Activated CD4-positive, alpha-beta T cell treated with anti-CD3 and anti-CD28 coated beads for 36 hours (primary cell): ENCODE measurements at regions of chr19 and their contacts with region 1.

Region 1: GRCh38 chr19:2096480-2097329 is at the start of gene IZUMO4:
- DNase-seq: peak; percentile 100
- ATAC-seq: peak; percentile 85
- H3K4me3 Mint-ChIP-seq: peak within 1 kb of the TSS; percentile 98
- H3K27ac Mint-ChIP-seq: peak within 1 kb of the TSS; percentile 94
- H3K4me1 Mint-ChIP-seq: peaks cover 35% of the 10 kb centered on the region
- H3K27me3 Mint-ChIP-seq: no peaks in the 10 kb centered on the region
- total RNA-seq, gene IZUMO4: 15.2 to 16.6 TPM

Region 2: GRCh38 chr19:1652471-1653299 is 444.0 kb before region 1 on chr19 and contains the start of gene TCF3:
- CTCF ChIA-PET with region 1: no interaction called
- POLR2A ChIA-PET with region 1: no interaction called
- intact Hi-C with region 1: loop called in 1 of 2 experiments (anchors 1 kb)
- DNase-seq: peak; percentile 99
- ATAC-seq: peak; percentile 94
- H3K4me3 Mint-ChIP-seq: peak within 1 kb of the TSS; percentile 88
- H3K27ac Mint-ChIP-seq: peak within 1 kb of the TSS; percentile 91
- H3K4me1 Mint-ChIP-seq: peaks cover 32% of the 10 kb centered on the region
- H3K27me3 Mint-ChIP-seq: no peaks in the 10 kb centered on the region
- total RNA-seq, gene TCF3: 115 to 133 TPM

Region 3: DNA sequence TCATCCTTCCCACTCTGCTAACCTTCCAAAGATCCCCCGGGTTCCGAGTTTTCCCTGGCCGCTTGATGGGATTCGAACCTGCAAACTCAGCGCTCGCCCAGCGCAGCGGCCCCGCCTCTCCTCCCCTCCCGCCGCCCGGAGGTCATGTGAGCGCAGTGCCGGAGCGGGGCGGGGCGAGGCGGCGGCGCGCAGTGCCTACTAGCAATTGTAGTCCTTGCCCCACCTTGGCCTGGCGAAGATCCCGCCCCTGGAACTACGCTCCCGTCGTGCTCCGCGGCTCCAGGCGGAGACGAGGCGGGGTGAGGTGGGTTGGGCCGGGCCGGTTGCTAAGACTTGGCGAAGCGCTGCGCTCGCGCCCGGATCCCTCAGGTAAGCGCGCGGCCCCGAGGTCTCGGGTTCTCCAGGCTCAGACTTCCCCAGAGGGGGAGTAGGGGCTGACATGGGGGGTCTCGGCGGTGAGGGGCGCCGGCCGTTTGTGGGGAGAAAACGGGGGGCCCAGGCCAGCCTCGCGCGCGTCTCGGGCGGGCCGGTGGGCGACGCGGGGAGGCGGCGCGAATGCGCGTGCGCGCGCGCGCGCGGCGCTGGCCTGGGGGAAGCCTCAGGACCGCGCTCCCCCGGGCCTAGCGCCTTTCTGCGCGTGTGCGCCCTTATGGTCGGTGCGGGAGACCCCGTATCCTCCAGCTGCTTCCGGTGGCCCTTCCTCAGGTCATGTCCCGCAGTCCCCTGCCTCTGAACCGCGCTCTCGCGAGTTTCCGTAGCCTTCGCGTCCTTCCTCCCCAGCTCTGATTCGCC is 191.4 kb before region 1 on chr19 and contains the starts of genes ADAT3 and SCAMP4:
- CTCF ChIA-PET with region 1: no interaction called
- POLR2A ChIA-PET with region 1: interaction called, 6 read pairs
- intact Hi-C with region 1: loop called in 1 of 2 experiments (anchors 1 kb)
- DNase-seq: peak; percentile 100
- ATAC-seq: peak; percentile 98
- H3K4me3 Mint-ChIP-seq: peak within 1 kb of the TSS; percentile 84
- H3K27ac Mint-ChIP-seq: peak within 1 kb of the TSS; percentile 82
- H3K4me1 Mint-ChIP-seq: peaks cover 45% of the 10 kb centered on the region
- H3K27me3 Mint-ChIP-seq: no peaks in the 10 kb centered on the region
- total RNA-seq, gene ADAT3: 5.6 to 6.1 TPM
- total RNA-seq, gene SCAMP4: 20.5 to 25.6 TPM

Region 4: GRCh38 chr19:2041683-2042484 is 54.8 kb before region 1 on chr19:
- CTCF ChIA-PET with region 1: interaction called, 4 read pairs
- POLR2A ChIA-PET with region 1: interaction called, 7 read pairs
- intact Hi-C with region 1: loop called in 1 of 2 experiments (anchors 1 kb)
- DNase-seq: peak; percentile 100
- ATAC-seq: peak; percentile 88
- H3K4me3 Mint-ChIP-seq: peak overlapping the region; percentile 73
- H3K27ac Mint-ChIP-seq: peak overlapping the region; percentile 88
- H3K4me1 Mint-ChIP-seq: peaks cover 17% of the 10 kb centered on the region
- H3K27me3 Mint-ChIP-seq: no peaks in the 10 kb centered on the region

Region 5: GRCh38 chr19:2084993-2085720 is 11.5 kb before region 1 on chr19:
- CTCF ChIA-PET with region 1: interaction called, 7 read pairs
- POLR2A ChIA-PET with region 1: interaction called, 4 read pairs
- intact Hi-C with region 1: loop called (anchors 1 kb)
- DNase-seq: peak; percentile 97
- ATAC-seq: peak; percentile 64
- H3K4me3 Mint-ChIP-seq: peak overlapping the region; percentile 96
- H3K27ac Mint-ChIP-seq: peak overlapping the region; percentile 99
- H3K4me1 Mint-ChIP-seq: peaks cover 57% of the 10 kb centered on the region
- H3K27me3 Mint-ChIP-seq: no peaks in the 10 kb centered on the region

Region 6: DNA sequence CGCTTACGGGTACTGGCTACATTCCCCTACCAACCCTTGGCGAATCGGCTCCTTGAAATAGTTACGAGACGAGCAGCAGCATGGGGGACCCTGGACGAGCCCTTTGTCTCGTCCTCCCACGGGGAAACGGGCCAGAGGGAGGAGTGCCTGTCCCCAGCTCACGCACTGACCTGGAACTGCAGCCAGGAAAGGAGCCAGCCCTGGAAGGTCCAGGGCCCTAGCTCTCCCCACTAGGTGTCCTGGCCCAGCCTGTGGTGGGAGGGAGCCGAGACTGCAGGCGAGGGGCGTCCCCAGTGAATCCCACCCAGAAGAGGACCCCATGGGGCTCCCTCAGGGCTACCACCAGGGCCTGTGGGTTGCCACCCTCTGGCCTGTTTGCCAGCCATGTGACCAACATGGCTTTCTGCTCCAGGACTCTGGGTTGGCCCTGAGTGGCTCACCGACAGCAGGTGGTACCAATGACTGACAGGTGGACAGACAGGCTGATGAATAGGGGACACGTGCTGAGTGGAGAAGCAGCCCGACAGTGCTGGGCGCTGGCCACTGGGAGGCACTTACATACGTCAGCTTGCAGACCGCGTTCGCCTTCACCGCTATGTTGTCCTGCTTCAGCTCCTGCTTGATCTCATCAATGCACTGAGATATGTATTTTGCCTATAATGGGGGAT is 41.5 kb after region 1 on chr19:
- CTCF ChIA-PET with region 1: no interaction called
- POLR2A ChIA-PET with region 1: no interaction called
- intact Hi-C with region 1: no loop called
- DNase-seq: no peak
- ATAC-seq: no peak
- H3K4me3 Mint-ChIP-seq: no peak overlapping the region
- H3K27ac Mint-ChIP-seq: no peak overlapping the region
- H3K4me1 Mint-ChIP-seq: no peaks in the 10 kb centered on the region
- H3K27me3 Mint-ChIP-seq: no peaks in the 10 kb centered on the region

Region 7: DNA sequence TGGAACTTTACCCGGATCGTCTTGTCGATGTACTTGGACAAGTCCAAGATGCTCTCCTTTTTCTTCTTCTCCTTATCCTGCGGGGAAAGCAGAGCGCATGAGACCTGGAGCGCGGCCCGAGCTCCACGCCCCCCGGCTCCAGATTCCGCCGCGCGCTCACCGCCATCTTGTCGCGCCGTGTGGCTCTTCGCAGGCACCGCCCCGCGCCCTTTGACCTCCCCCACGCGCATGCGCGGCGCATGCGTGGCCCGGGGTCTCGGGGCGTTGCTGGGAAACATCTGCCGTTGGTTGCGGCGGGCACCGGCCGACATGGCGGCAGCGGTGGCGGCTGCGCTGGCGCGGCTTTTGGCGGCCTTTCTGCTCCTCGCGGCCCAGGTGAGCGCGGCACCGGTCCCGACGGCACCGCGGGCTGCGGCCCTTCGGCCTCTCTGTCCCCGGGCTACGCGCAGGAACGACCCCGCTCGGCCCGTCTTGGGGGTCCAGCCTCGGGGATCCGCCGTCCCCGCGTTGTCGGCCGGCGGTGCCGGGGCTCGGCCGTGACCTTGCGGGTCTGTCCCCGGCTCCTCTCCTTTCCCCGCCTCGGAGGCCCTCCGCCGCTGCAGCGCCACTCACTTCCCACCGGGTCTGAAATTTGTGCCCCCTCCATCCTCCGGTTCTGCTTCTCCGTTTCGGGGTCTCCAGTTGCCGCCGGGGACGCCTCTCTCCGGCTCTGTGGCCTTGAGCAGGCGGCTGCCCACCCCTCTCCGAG is 231.9 kb after region 1 on chr19 and contains the starts of genes LSM7 and SPPL2B:
- CTCF ChIA-PET with region 1: no interaction called
- POLR2A ChIA-PET with region 1: no interaction called
- intact Hi-C with region 1: loop called in 1 of 2 experiments (anchors 1 kb)
- DNase-seq: peak; percentile 95
- ATAC-seq: peak; percentile 78
- H3K4me3 Mint-ChIP-seq: peak within 1 kb of the TSS; percentile 98
- H3K27ac Mint-ChIP-seq: peak within 1 kb of the TSS; percentile 99
- H3K4me1 Mint-ChIP-seq: peaks cover 69% of the 10 kb centered on the region
- H3K27me3 Mint-ChIP-seq: no peaks in the 10 kb centered on the region
- total RNA-seq, gene LSM7: 113 to 134 TPM
- total RNA-seq, gene SPPL2B: 37.7 to 48.5 TPM